ENCODE measurements at regions of chr22 and their contacts with region 1.

Region 1: GRCh38 chr22:28019881-28020871 is 101.1 kb upstream of the PITPNB start:
- DNase-seq: peak; percentile 65 to 88 (median 78)
- H3K4me3 ChIP-seq: peak overlapping the region in 19 of 59 donors; percentile 2 to 42 (median 20)
- H3K27ac ChIP-seq: peak overlapping the region in 43 of 59 donors; percentile 10 to 83 (median 55)
- H3K27me3 ChIP-seq: no peaks in the 10 kb centered on the region
- CTCF ChIP-seq: peak; percentile 81 to 99 (median 97)

Region 2: GRCh38 chr22:26672590-26673468 is 1347.3 kb before region 1 on chr22:
- intact Hi-C with region 1: loop called in 1 of 2 experiments (anchors 10 kb)
- DNase-seq: peak; percentile 64 to 92 (median 89)
- H3K4me3 ChIP-seq: peak overlapping the region; percentile 46 to 93 (median 80)
- H3K27ac ChIP-seq: peak overlapping the region; percentile 59 to 98 (median 94)
- H3K27me3 ChIP-seq: peaks cover 0 to 5% (median 0%) of the 10 kb centered on the region in 45 donors
- CTCF ChIP-seq: peak in 55 of 56 donors; percentile 37 to 81 (median 67)

Region 3: DNA sequence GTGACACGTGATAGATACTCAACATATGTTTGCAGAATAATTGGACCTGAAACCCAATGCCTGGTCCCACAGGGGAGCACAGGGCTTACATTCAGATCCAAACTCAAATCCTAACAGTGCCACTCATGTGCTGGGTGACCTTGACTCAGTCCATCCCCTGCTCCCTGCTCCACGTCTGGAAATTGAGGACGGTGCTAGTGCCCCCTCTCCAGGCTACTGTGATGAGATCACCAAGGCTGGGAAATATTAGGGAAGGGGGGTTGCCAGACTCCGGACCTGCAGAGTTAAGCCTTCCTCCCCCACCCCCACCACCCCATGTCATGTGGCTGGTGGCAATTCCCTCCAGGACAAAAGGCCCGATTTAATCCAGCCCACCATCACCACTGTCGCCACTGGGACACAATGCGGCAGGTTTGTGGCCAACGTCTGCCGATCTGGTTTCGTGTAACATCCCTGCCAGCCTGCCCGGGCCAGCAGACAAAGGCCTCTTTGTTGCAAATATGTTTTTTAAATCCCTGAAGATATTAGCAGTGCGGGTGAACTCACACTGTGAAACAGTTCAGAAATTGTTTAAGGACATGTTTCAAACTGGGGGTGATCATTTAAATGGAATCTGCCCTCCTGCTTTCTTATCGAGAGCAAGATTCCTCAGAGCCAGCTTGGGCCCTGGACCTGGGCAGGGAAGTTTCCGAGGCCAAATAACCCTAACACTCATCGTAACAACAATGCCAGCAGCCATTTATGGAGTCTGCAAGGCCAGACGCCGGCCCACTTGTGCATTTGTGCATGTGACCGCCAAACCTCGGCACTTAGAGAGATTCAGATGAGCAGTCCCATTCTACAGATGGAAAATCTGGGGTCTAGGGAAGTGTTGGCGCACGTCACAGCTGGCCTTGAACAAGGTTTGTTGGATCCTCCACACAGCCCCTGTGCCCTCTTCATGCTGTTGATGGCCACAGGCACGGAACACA is 199.0 kb before region 1 on chr22:
- intact Hi-C with region 1: no loop called
- DNase-seq: no peak
- H3K4me3 ChIP-seq: peak overlapping the region in 4 of 59 donors; percentile 23 to 35 (median 30)
- H3K27ac ChIP-seq: no peak overlapping the region
- H3K27me3 ChIP-seq: no peaks in the 10 kb centered on the region
- CTCF ChIP-seq: no peak

Region 4: GRCh38 chr22:28829358-28830181 is 809.4 kb after region 1 on chr22:
- intact Hi-C with region 1: loop called in 1 of 2 experiments (anchors 10 kb)
- DNase-seq: peak; percentile 49 to 83 (median 66)
- H3K4me3 ChIP-seq: peak overlapping the region in 3 of 59 donors; percentile 2 to 19 (median 9)
- H3K27ac ChIP-seq: peak overlapping the region in 1 of 59 donors; percentile 16
- H3K27me3 ChIP-seq: no peaks in the 10 kb centered on the region
- CTCF ChIP-seq: peak; percentile 71 to 100 (median 97)

Measured in dorsolateral prefrontal cortex (tissue), 120 donors.